HAP-1 (cell line): ENCODE measurements at regions of chr9 and their contacts with region 1.

Region 1: DNA sequence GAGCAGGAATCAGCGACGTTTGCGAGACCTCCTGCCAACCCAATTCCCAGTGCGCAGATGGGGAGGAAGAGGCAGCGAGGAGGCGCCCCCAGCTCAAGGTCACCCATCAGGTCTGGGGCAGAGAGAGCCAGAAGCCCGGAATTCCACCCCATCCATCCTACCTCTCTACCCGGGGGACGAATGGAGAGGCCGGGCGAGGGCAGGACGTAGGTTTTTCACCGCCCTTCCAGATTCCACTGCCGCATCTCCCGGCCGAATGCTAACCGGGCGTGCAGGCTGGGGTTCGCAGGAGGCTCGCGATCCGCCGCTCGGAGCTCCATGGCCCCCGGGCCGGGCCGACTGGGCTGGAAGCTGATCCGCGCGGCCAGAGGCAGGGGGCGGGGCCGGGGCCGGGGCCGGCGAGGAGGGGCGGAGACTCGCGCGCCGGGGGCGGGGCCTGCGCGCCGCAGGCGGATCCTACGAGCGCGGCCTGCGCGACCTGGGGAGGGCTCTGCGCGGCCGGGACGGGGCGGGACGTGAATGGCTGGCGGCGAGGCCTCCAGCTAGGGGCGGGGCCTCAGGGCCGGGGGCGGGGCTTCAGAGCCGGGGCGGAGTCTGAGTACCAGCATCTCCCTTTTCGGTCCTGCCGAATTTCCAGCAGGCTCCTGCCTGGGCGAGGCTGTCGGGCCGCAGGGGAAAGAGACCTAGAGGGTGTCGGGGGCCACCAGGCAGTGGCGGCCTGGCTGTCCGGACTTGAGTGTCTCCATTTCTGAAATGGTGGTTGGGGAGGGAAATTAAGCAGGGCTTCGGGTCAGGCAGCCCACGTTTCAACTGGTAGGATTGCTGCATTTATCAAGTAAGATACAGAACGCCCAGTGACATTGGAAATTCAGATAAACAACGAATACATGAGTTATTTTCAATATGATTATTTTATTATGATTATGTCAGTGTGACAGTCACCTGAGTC is at the start of gene ST6GALNAC4:
- DNase-seq: peak; percentile 91 to 96
- H3K4me3 ChIP-seq: peak within 1 kb of the TSS; percentile 60
- H3K4me1 ChIP-seq: peaks cover 2% of the 10 kb centered on the region
- H3K27me3 ChIP-seq: peaks cover 3% of the 10 kb centered on the region; the same call in 1 of the 2 replicates

Region 2: DNA sequence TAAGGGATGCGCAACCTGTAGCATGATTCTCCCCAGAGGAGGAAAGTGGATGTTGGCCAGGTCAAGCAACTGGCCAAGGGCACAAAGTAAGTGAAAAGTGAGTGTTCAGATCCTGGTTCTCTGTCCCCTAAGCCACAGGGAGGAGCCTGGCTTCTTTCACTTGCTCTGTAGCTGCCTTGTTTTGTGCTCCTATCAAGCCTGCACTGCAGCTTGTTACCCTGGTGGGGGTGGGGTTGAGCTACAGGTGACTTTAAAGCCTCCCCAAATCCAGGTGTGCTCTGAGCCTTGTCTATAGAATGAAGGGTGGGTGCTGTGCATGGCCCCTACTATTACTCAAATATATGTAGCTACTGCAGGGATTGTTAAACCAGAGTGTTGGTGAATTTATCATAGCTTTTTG is 969.4 kb before region 1 on chr9:
- in situ Hi-C with region 1: loop called (anchors 25 kb)
- DNase-seq: no peak
- H3K4me3 ChIP-seq: no peak overlapping the region
- H3K4me1 ChIP-seq: no peaks in the 10 kb centered on the region
- H3K27me3 ChIP-seq: no peaks in the 10 kb centered on the region

Region 3: DNA sequence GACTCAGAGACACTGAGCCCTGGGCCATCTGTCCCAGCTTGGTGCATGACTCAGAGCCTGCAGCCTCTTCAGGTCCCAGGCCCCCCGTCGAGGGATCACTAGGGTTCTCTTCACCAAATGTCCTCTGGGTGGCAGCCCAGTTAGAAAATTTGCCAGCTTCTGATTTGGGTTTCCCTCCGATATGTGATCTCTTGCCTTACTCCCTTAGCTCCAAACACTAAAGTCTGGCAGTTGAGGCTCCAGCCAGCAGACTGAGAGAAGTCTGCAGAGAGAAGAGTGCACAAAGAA is 711.8 kb before region 1 on chr9:
- in situ Hi-C with region 1: loop called (anchors 5 kb)
- DNase-seq: peak in 1 of 2 experiments; percentile 51
- H3K4me3 ChIP-seq: no peak overlapping the region
- H3K4me1 ChIP-seq: no peaks in the 10 kb centered on the region
- H3K27me3 ChIP-seq: no peaks in the 10 kb centered on the region

Region 4: GRCh38 chr9:127503947-127504782 is 412.8 kb before region 1 on chr9:
- in situ Hi-C with region 1: loop called (anchors 10 kb)
- DNase-seq: peak; percentile 49 to 87
- H3K4me3 ChIP-seq: no peak overlapping the region
- H3K4me1 ChIP-seq: no peaks in the 10 kb centered on the region
- H3K27me3 ChIP-seq: no peaks in the 10 kb centered on the region

Region 5: DNA sequence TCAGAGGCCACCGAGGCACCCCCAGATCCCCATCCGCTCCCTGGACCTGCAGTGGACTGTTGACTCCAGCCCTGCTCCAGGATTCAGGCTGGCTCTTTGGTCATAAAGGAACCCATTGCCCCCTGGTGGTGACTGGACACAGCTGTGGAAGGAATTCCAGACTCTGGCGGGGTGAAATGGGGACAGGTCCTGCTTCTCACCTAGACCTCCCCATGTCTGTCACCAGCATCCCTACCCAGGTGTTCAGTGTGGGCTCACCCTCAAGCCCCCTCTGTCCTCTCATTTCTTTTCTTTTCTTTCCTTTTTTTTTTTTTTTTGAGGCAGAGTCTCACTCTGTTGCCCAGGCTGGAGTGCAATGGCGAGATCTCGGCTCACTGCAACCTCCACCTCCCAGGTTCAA is 330.4 kb before region 1 on chr9:
- in situ Hi-C with region 1: loop called (anchors 5 kb)
- DNase-seq: peak; percentile 50 to 85
- H3K4me3 ChIP-seq: no peak overlapping the region
- H3K4me1 ChIP-seq: no peaks in the 10 kb centered on the region
- H3K27me3 ChIP-seq: no peaks in the 10 kb centered on the region

Region 6: GRCh38 chr9:127734747-127735529 is 182.0 kb before region 1 on chr9 and contains the start of gene TOR2A:
- in situ Hi-C with region 1: loop called (anchors 10 kb)
- DNase-seq: peak; percentile 96 to 99
- H3K4me3 ChIP-seq: peak within 1 kb of the TSS; percentile 57
- H3K4me1 ChIP-seq: peaks cover 8% of the 10 kb centered on the region
- H3K27me3 ChIP-seq: no peaks in the 10 kb centered on the region

Region 7: DNA sequence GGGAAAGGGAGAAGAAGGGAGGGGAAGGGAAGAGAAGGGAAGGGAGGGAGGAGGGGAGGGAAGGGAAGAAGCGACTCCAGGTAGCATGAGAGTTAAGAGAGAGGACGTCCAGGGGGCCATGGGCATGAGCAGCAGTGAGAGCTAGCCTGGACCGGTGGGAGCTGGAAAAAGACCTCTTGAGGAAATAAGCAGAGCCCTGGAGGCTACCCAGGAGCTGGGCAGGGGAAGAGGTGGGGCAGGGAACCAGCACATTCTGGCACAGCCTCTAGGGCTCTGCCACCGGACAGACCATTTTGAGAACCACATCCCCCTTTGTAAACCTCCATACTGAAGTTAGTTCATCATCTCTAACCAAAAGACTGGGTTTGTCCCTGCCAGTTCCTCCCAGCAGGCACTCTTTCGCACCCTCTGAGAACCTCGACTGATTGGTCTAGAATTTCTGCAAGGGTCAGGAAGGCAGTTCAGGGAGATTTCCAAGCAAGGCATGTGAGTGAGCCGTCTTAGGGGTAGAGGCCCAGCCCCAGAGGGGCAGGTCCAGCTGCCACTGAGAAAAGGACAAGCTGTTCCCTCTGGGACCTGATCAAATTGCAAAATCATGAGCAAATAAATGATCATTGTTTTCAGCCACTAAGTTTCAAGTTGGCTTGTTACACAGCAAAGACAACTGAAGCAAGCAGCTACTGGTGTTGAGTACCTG is 138.6 kb after region 1 on chr9:
- in situ Hi-C with region 1: no loop called
- DNase-seq: no peak
- H3K4me3 ChIP-seq: no peak overlapping the region
- H3K4me1 ChIP-seq: no peaks in the 10 kb centered on the region
- H3K27me3 ChIP-seq: no peaks in the 10 kb centered on the region